Sciatic nerve (tissue), 2 donors: ENCODE measurements at regions of chr6 and their contacts with region 1.

Region 1: DNA sequence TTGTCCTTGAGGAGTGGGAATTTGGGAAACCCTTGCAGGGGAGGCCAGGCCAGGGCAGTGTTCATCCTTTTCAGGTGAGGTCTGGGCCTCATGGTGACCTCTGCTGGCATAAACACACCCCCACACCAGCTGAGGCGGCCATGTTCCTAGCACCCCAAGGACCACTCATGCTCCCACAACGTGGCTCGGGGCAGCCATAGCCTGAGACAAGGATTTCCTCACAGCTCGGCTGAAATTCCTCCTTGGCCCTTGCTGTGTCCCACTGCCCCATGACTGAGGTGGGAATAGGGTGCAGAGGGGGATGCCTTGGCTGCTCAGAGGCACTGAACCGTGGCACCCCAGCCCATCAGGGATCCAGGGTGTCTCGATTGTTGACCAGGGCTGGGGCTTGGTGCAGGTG is 27.3 kb upstream of the SPDEF start:
- DNase-seq: no peak
- ATAC-seq: peak; percentile 10

Region 2: GRCh38 chr6:34174846-34175399 is 408.5 kb before region 1 on chr6:
- intact Hi-C with region 1: loop called (anchors 10 kb)
- DNase-seq: no peak
- ATAC-seq: no peak